GM12878 (cell line): ENCODE measurements at regions of chr5 and their contacts with region 1.

Region 1: DNA sequence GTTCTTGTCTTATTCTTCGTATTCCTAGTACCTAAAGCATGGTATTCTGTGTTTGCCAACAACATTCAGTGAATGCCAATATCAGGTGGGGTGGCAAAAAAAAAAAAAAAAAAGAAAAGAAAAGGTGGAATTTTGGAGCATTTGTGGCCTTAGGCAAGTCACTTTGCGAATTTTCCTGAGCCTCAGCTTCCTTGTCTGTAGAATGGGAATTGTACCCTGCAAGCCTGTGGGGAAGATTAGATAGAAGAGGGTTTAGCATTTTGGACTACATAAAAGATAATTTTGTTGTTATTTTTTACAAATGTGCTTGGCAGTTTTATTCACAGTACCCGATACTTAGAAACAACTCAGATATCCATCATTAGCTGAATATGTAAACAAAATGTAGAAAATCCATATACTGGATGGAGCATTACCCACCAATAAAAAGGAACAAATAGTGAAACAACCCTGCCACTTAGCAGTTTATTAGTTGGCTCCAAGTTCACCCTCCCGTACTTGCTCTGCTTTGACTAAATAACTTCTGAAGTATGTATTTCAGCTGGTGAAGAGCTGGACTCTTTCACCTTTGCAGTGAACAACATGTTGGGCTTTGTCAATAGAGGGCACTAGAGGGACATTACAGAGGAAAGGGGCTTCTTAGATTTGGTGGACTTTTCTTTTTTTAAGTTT is 13.6 kb downstream of the UBE2D2 start:
- DNase-seq: no peak
- ATAC-seq: peak; percentile 78
- H3K4me3 ChIP-seq: no peak overlapping the region
- H3K27ac ChIP-seq: no peak overlapping the region
- H3K4me1 ChIP-seq: peaks cover 40% of the 10 kb centered on the region
- H3K27me3 ChIP-seq: no peaks in the 10 kb centered on the region
- CTCF ChIP-seq: peak; percentile 65 to 78 (median 70)
- EP300 ChIP-seq: no peak
- POLR2A ChIP-seq: no peak
- RAD21 ChIP-seq: peak; percentile 75

Region 2: GRCh38 chr5:139524932-139525585 is 49.7 kb before region 1 on chr5:
- CTCF ChIA-PET with region 1: interaction called, 13 read pairs
- POLR2A ChIA-PET with region 1: interaction called, 4 read pairs
- RAD21 ChIA-PET with region 1: interaction called, 16 read pairs
- SMC1A ChIA-PET with region 1: interaction called, 6 read pairs
- in situ Hi-C with region 1: no loop called
- intact Hi-C with region 1: no loop called
- DNase-seq: no peak
- ATAC-seq: peak; percentile 88
- H3K4me3 ChIP-seq: 0 out of 2 replicates have a peak overlapping the region, but pooled peaks have one; percentile 2
- H3K27ac ChIP-seq: peak overlapping the region; percentile 59
- H3K4me1 ChIP-seq: peaks cover 28% of the 10 kb centered on the region
- H3K27me3 ChIP-seq: no peaks in the 10 kb centered on the region
- CTCF ChIP-seq: no peak
- EP300 ChIP-seq: 0 out of 4 replicates have a peak, but pooled peaks of 1 of the 2 experiments have one; percentile 24
- POLR2A ChIP-seq: no peak
- RAD21 ChIP-seq: no peak

Region 3: DNA sequence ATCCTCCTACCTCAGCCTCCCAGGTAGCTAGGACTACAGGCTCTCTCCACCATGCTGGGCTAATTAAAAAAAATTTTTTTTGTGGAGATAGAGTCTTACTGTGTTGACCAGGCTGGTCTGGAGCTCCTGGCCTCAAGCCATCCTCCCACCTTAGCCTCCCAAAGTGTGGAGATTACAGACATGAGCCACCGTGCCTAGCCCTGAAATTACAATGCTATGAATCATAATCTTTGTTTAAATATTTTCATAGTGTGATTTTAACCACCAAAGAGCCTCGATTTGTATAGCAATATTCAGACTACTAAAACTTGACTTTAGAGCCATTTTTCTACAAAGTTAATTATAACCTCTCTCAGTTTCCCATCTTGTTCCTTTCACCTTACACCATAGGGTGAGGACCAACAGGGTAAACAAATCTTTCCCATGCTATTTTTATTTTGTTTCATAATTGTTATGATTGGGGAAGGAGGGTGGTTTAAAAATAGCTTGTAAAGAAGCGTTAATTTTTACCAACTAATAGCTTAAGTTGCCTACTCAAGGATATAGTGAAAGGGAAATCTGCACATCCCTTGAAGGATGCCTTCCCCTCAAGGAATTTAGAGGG is 19.0 kb after region 1 on chr5:
- CTCF ChIA-PET with region 1: interaction called, 24 read pairs
- POLR2A ChIA-PET with region 1: interaction called, 9 read pairs
- RAD21 ChIA-PET with region 1: interaction called, 4 read pairs
- SMC1A ChIA-PET with region 1: interaction called, 15 read pairs
- in situ Hi-C with region 1: no loop called
- intact Hi-C with region 1: no loop called
- DNase-seq: no peak
- ATAC-seq: peak; percentile 44
- H3K4me3 ChIP-seq: no peak overlapping the region
- H3K27ac ChIP-seq: peak overlapping the region; percentile 34
- H3K4me1 ChIP-seq: peaks cover 25% of the 10 kb centered on the region
- H3K27me3 ChIP-seq: no peaks in the 10 kb centered on the region
- CTCF ChIP-seq: no peak
- EP300 ChIP-seq: no peak
- POLR2A ChIP-seq: no peak
- RAD21 ChIP-seq: no peak

Region 4: DNA sequence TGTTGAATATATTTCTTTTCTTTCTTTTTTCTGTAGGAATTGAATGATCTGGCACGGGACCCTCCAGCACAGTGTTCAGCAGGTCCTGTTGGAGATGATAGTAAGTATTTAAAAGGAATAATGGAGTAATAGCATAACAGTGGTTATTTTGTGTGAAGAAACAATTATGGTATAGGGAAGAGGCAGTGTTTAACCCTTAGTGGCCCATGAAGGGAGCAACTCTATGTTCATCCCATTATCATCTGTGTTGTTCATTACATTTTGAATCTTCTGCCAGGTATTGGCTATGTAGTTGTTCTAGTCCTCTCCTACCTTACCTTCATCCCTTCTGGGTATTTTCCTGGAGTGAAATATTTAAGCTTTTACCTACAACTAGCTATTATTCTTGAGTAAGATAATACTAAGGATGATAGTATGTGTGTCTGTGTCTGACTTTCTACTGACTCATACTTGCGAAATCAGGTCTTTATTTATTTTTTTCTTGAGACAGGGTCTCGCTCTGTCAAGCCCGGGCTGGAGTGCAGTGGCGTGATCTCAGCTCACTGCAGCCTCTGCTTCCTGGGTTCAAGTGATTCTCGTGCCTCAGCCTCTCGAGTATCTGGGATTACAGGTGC is 25.7 kb after region 1 on chr5:
- CTCF ChIA-PET with region 1: interaction called, 19 read pairs
- POLR2A ChIA-PET with region 1: interaction called, 4 read pairs
- RAD21 ChIA-PET with region 1: interaction called, 11 read pairs
- SMC1A ChIA-PET with region 1: interaction called, 13 read pairs
- in situ Hi-C with region 1: no loop called
- intact Hi-C with region 1: loop called (anchors 5 kb)
- DNase-seq: no peak
- ATAC-seq: no peak
- H3K4me3 ChIP-seq: no peak overlapping the region
- H3K27ac ChIP-seq: no peak overlapping the region
- H3K4me1 ChIP-seq: no peaks in the 10 kb centered on the region
- H3K27me3 ChIP-seq: no peaks in the 10 kb centered on the region
- CTCF ChIP-seq: no peak
- EP300 ChIP-seq: no peak
- POLR2A ChIP-seq: no peak
- RAD21 ChIP-seq: no peak

Region 5: GRCh38 chr5:139605887-139606286 is 31.1 kb after region 1 on chr5:
- CTCF ChIA-PET with region 1: interaction called, 19 read pairs
- POLR2A ChIA-PET with region 1: interaction called, 4 read pairs
- RAD21 ChIA-PET with region 1: interaction called, 11 read pairs
- SMC1A ChIA-PET with region 1: interaction called, 13 read pairs
- in situ Hi-C with region 1: no loop called
- intact Hi-C with region 1: loop called (anchors 5 kb)
- DNase-seq: peak; percentile 28
- ATAC-seq: peak; percentile 80
- H3K4me3 ChIP-seq: no peak overlapping the region
- H3K27ac ChIP-seq: peak overlapping the region; percentile 31; the same call in 1 of the 2 replicates
- H3K4me1 ChIP-seq: peaks cover 10% of the 10 kb centered on the region; the same call in 1 of the 2 replicates
- H3K27me3 ChIP-seq: no peaks in the 10 kb centered on the region
- CTCF ChIP-seq: no peak
- EP300 ChIP-seq: no peak
- POLR2A ChIP-seq: no peak
- RAD21 ChIP-seq: no peak

Region 6: GRCh38 chr5:139611703-139612584 is 37.2 kb after region 1 on chr5:
- CTCF ChIA-PET with region 1: interaction called, 9 read pairs
- POLR2A ChIA-PET with region 1: interaction called, 5 read pairs
- RAD21 ChIA-PET with region 1: interaction called, 6 read pairs
- SMC1A ChIA-PET with region 1: interaction called, 6 read pairs
- in situ Hi-C with region 1: no loop called
- intact Hi-C with region 1: loop called (anchors 2 kb)
- DNase-seq: no peak
- ATAC-seq: peak; percentile 90
- H3K4me3 ChIP-seq: no peak overlapping the region
- H3K27ac ChIP-seq: peak overlapping the region; percentile 45; the same call in 1 of the 2 replicates
- H3K4me1 ChIP-seq: peaks cover 9% of the 10 kb centered on the region; the same call in 1 of the 2 replicates
- H3K27me3 ChIP-seq: no peaks in the 10 kb centered on the region
- CTCF ChIP-seq: no peak
- EP300 ChIP-seq: no peak
- POLR2A ChIP-seq: no peak
- RAD21 ChIP-seq: no peak